Activated CD4-positive, alpha-beta memory T cell treated with anti-CD3 and anti-CD28 coated beads for 36 hours (primary cell): ENCODE measurements at regions of chr15 and their contacts with region 1.

Region 1: DNA sequence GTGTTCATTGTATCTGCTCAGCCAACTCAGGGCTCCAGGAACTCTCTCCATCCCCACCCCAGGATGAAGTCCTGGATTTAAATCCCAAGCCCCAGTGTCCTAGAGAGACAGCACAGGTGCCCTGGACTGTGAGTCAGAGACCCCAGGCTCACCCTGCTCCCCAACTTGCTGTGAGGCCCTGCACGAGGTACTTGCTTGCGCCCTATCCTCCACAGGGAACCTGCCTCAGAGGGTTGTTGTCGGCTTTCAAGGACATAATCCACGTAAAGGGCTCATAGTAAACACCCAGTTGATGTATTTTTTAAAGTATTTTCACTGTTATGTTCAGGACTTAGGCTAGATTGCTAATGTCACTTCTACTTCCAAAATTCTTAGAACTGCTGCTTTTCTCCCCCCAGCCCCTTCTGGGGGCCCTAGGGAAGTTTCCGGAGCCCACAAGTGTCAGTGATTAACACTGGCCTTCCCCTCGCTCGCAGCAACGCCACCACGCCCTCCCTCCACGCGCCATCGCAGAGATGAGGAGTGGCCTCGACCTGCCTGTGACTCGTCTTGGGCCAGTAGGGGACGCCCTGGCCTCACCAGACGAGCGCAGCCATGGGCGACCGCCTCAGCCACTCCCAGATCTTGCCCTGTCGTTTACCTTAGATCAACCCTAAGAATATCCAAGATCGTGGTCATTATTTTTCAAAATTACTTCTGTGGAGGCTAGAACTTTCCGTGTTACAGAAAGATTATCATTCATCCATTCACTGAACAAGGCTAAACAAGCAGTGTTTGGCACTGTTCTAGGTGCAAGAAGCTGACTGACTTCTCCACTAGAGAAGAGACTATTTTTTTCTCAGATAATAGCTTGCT is 6.0 kb upstream of the SRP14 start:
- DNase-seq: peak; percentile 93
- H3K4me3 Mint-ChIP-seq: peak overlapping the region; percentile 50
- H3K27ac Mint-ChIP-seq: peak overlapping the region; percentile 71
- H3K4me1 Mint-ChIP-seq: peaks cover 65% of the 10 kb centered on the region
- H3K27me3 Mint-ChIP-seq: no peaks in the 10 kb centered on the region

Region 2: DNA sequence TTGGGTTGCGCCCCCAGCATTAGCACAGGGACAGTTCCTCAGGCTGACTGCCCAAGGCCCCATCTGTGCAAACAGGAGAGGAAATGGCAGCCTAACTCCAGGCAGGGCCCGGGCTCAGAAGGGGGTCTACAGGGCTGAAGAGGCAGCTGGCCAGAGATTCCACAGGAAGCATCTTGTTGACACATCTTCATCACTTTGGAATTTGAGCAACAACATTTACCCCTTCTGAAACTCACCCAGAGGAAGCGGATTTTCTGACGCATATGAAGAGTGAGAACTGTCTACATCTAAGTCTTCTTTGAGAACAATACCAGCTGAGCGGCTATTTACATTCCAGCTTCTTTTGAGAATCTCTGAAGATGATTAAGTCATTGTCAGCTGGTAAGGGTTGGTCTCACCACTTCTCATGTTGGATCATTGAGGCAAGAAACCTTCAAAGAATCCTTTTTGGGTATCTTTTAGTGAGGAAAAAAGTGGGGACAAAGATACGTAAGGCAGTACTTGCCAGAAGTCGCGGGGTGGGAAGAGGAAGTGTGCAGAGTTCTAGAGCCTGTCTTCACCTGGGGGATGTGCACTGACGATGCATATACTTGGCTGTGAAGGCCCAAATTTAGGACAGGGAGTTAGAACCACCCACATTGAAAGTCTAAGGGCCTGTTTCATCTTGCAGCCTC is 19.4 kb after region 1 on chr15:
- CTCF ChIA-PET with region 1: interaction called, 5 read pairs
- POLR2A ChIA-PET with region 1: interaction called, 3 read pairs
- intact Hi-C with region 1: loop called (anchors 1 kb)
- DNase-seq: no peak
- H3K4me3 Mint-ChIP-seq: no peak overlapping the region
- H3K27ac Mint-ChIP-seq: peak overlapping the region; percentile 19
- H3K4me1 Mint-ChIP-seq: peaks cover 17% of the 10 kb centered on the region
- H3K27me3 Mint-ChIP-seq: no peaks in the 10 kb centered on the region

Region 3: GRCh38 chr15:40098489-40099261 is 53.7 kb after region 1 on chr15:
- CTCF ChIA-PET with region 1: interaction called, 145 read pairs
- POLR2A ChIA-PET with region 1: interaction called, 22 read pairs
- intact Hi-C with region 1: loop called (anchors 1 kb)
- DNase-seq: peak; percentile 83
- H3K4me3 Mint-ChIP-seq: peak overlapping the region; percentile 51
- H3K27ac Mint-ChIP-seq: peak overlapping the region; percentile 92
- H3K4me1 Mint-ChIP-seq: peaks cover 55% of the 10 kb centered on the region
- H3K27me3 Mint-ChIP-seq: no peaks in the 10 kb centered on the region

Region 4: GRCh38 chr15:40128766-40129660 is 84.1 kb after region 1 on chr15:
- CTCF ChIA-PET with region 1: interaction called, 6 read pairs
- POLR2A ChIA-PET with region 1: no interaction called
- intact Hi-C with region 1: loop called (anchors 1 kb)
- DNase-seq: peak; percentile 48
- H3K4me3 Mint-ChIP-seq: no peak overlapping the region
- H3K27ac Mint-ChIP-seq: peak overlapping the region; percentile 46
- H3K4me1 Mint-ChIP-seq: no peaks in the 10 kb centered on the region
- H3K27me3 Mint-ChIP-seq: peaks cover 13% of the 10 kb centered on the region

Region 5: DNA sequence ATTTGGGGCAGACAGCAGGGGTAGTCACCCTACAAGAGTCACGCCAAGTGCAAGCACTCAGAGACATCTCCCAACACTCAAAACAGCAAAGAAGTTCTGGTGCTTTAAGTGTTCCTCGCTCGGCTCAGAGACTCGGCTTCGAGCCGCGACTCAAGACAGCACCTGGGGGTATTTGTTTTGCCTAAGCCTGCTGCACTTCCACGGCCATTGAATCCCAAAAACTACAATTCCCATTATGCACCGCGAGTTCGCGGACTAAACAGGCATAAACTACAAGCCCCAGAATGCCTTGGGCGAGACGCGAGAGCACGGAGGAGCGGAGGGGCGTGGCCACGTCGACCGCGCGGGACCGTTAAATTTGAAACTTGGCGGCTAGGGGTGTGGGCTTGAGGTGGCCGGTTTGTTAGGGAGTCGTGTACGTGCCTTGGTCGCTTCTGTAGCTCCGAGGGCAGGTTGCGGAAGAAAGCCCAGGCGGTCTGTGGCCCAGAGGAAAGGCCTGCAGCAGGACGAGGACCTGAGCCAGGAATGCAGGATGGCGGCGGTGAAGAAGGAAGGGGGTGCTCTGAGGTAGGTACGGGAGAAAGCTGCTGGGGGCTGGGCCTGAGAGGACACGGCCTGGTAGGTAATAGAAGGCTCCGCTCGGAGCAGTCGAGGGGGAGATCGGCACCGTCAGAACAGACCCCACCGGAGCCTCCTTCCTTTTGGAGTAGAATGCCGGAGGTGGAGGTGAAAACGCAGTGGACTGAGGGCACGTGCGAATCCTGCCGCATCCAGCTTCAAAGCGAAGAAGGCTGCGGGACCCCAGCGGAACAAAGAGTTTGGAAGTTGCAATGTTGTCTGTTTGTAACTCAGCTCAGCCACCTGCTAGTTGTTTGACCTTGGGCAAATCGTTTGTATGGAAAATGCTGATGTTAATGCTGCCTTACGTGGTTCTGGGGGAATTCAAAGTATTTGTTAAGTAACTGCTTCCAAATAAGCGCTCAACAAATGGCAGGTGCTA is 116.0 kb after region 1 on chr15 and contains the start of gene BUB1B:
- CTCF ChIA-PET with region 1: interaction called, 24 read pairs
- POLR2A ChIA-PET with region 1: interaction called, 8 read pairs
- intact Hi-C with region 1: loop called (anchors 1 kb)
- DNase-seq: peak; percentile 96
- H3K4me3 Mint-ChIP-seq: no peak within 1 kb of the TSS
- H3K27ac Mint-ChIP-seq: no peak within 1 kb of the TSS
- H3K4me1 Mint-ChIP-seq: peaks cover 6% of the 10 kb centered on the region
- H3K27me3 Mint-ChIP-seq: no peaks in the 10 kb centered on the region
- total RNA-seq, gene BUB1B: 88.8 to 96.1 TPM

Region 6: GRCh38 chr15:40217159-40217824 is 172.3 kb after region 1 on chr15:
- CTCF ChIA-PET with region 1: interaction called, 46 read pairs
- POLR2A ChIA-PET with region 1: no interaction called
- intact Hi-C with region 1: no loop called
- DNase-seq: peak; percentile 40
- H3K4me3 Mint-ChIP-seq: no peak overlapping the region
- H3K27ac Mint-ChIP-seq: no peak overlapping the region
- H3K4me1 Mint-ChIP-seq: no peaks in the 10 kb centered on the region
- H3K27me3 Mint-ChIP-seq: no peaks in the 10 kb centered on the region